Caco-2 (cell line): ENCODE measurements at regions of chr1 and their contacts with region 1.

Region 1: DNA sequence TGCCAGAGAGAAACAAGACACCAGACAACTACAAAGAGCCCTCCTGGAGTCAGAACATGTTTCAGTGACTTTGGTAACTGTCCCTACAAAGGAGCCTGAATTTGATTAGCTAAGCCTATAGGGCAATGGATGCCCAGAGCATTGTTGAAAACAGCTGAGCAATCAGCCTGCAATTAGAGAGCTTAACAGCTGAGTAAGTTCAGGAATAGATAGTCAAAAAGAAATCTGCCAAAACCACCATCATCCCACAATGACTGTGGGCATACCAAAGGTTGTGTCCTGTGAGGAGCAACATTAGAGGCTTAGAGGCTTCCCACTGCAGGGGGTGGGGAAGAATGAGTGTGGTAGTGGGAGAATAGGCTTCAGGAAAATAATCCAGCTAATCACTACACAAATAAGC is 32.1 kb downstream of the SH3BP5L start:
- DNase-seq: no peak
- H3K4me3 ChIP-seq: no peak overlapping the region
- H3K4me3 Mint-ChIP-seq: no peak overlapping the region
- H3K27ac Mint-ChIP-seq: no peak overlapping the region
- H3K4me1 ChIP-seq: peaks cover 11% of the 10 kb centered on the region; the same call in 1 of the 2 replicates
- H3K4me1 Mint-ChIP-seq: no peaks in the 10 kb centered on the region
- H3K27me3 ChIP-seq: no peaks in the 10 kb centered on the region
- H3K27me3 Mint-ChIP-seq: no peaks in the 10 kb centered on the region
- CTCF ChIP-seq: no peak

Region 2: DNA sequence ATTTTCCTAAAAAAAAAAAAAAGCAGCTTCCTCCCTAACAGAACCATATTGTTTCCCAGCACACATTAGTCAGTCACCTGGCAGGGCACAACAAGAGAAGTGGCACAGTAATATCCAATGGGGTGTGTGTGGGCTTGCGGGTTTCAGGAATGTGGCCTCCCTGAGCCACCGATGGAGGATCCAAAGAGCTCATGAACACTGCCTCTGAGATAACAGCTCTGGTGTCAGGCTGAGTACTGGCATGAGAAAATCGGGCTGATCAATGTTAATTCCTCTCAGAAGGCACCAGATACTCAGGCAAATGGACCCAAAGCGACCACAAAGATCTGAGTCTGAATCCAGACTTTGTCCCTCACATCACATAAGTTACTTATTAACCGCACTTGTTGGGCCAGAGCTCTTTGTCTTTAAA is 35.8 kb before region 1 on chr1:
- CTCF ChIA-PET with region 1: no interaction called
- POLR2A ChIA-PET with region 1: no interaction called
- intact Hi-C with region 1: loop called (anchors 5 kb)
- DNase-seq: peak in 1 of 2 experiments; percentile 23
- H3K4me3 ChIP-seq: no peak overlapping the region
- H3K4me3 Mint-ChIP-seq: no peak overlapping the region
- H3K27ac Mint-ChIP-seq: no peak overlapping the region
- H3K4me1 ChIP-seq: peaks cover 8% of the 10 kb centered on the region; the same call in 1 of the 2 replicates
- H3K4me1 Mint-ChIP-seq: no peaks in the 10 kb centered on the region
- H3K27me3 ChIP-seq: no peaks in the 10 kb centered on the region
- H3K27me3 Mint-ChIP-seq: no peaks in the 10 kb centered on the region
- CTCF ChIP-seq: no peak

Region 3: GRCh38 chr1:248913933-248914332 is 120.3 kb after region 1 on chr1:
- CTCF ChIA-PET with region 1: no interaction called
- POLR2A ChIA-PET with region 1: no interaction called
- intact Hi-C with region 1: no loop called
- DNase-seq: no peak
- H3K4me3 ChIP-seq: no peak overlapping the region
- H3K4me3 Mint-ChIP-seq: no peak overlapping the region
- H3K27ac Mint-ChIP-seq: no peak overlapping the region
- H3K4me1 ChIP-seq: no peaks in the 10 kb centered on the region
- H3K4me1 Mint-ChIP-seq: peaks cover 1% of the 10 kb centered on the region
- H3K27me3 ChIP-seq: no peaks in the 10 kb centered on the region
- H3K27me3 Mint-ChIP-seq: no peaks in the 10 kb centered on the region
- CTCF ChIP-seq: no peak